ENCODE measurements at regions of chr2 and their contacts with region 1.

Region 1: GRCh38 chr2:196277002-196277401 is 105.6 kb upstream of the STK17B start:
- DNase-seq: peak; percentile 53
- H3K4me3 Mint-ChIP-seq: no peak overlapping the region
- H3K27ac Mint-ChIP-seq: peak overlapping the region; percentile 8
- H3K4me1 Mint-ChIP-seq: peaks cover 44% of the 10 kb centered on the region
- H3K27me3 Mint-ChIP-seq: no peaks in the 10 kb centered on the region

Region 2: GRCh38 chr2:196143730-196144131 is 133.3 kb before region 1 on chr2:
- CTCF ChIA-PET with region 1: interaction called, 11 read pairs
- DNase-seq: no peak
- H3K4me3 Mint-ChIP-seq: peak overlapping the region; percentile 10
- H3K27ac Mint-ChIP-seq: peak overlapping the region; percentile 74
- H3K4me1 Mint-ChIP-seq: peaks cover 69% of the 10 kb centered on the region
- H3K27me3 Mint-ChIP-seq: no peaks in the 10 kb centered on the region

Region 3: GRCh38 chr2:196171248-196171871 is 105.6 kb before region 1 on chr2 and contains the start of gene STK17B:
- CTCF ChIA-PET with region 1: interaction called, 39 read pairs
- DNase-seq: peak; percentile 97
- H3K4me3 Mint-ChIP-seq: peak within 1 kb of the TSS; percentile 89
- H3K27ac Mint-ChIP-seq: peak within 1 kb of the TSS; percentile 96
- H3K4me1 Mint-ChIP-seq: peaks cover 35% of the 10 kb centered on the region
- H3K27me3 Mint-ChIP-seq: no peaks in the 10 kb centered on the region

Region 4: DNA sequence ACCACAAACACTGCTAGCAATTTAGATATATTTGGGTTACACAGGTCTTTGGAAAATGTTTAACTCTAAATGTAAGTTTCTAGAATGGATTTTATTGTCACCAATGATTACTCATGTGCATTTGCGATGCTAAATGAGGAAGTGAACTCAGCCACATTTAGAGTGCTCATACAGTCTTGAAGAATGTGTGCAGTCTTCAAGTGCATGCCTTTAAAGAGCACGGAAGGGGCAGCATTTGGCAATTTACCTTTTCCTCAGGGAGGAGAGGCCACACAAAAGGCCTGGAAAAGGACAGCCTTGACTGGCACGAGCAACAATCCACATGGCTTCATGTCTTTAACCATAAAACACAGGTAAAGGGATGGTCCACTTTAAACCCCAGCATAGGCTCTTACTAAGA is 27.1 kb before region 1 on chr2:
- CTCF ChIA-PET with region 1: interaction called, 16 read pairs
- DNase-seq: no peak
- H3K4me3 Mint-ChIP-seq: no peak overlapping the region
- H3K27ac Mint-ChIP-seq: peak overlapping the region; percentile 43
- H3K4me1 Mint-ChIP-seq: peaks cover 76% of the 10 kb centered on the region
- H3K27me3 Mint-ChIP-seq: no peaks in the 10 kb centered on the region

Region 5: DNA sequence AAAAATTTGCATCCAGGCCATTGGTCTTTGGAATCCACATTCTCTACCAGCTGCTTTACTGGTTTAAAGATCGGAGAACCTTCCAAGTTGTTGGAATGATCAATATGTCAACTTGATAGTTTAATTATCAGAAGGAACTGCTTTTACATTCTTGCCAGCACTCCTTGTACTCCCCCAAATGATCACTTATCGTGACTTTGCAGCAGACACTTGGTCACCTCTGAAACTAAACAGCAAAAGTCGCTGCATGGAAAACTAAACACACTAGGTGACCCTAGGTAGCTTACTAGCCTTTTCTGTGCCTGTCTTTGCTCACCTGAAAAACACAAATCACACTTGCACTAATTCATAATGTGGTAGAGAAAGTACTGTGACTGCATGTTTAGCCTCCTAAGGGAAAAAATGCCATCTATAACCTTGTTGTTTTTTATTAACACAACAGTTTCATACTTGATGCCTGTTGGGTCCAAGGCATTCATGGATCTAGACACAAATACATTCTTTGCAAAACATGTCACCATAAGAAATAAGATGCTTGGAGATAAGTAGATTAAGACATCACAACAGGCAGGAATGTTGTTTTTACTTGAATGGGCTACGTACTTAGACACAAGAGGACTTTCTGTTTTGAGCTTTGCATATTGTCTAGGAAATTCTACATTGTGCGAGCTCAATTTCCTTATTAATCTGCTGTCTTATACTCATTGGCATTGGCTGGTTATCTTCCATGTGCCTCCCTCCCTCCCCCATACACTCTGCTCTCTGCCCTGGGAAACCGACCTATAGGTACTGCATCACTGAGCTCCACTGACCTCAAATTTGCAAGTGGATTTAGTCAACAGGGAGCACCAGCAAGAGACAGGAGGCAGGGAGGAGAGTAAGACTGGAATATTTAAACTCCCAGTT is 113.5 kb after region 1 on chr2:
- CTCF ChIA-PET with region 1: no interaction called
- DNase-seq: no peak
- H3K4me3 Mint-ChIP-seq: no peak overlapping the region
- H3K27ac Mint-ChIP-seq: no peak overlapping the region
- H3K4me1 Mint-ChIP-seq: no peaks in the 10 kb centered on the region
- H3K27me3 Mint-ChIP-seq: no peaks in the 10 kb centered on the region